Activated CD8-positive, alpha-beta T cell treated with anti-CD3 and anti-CD28 coated beads, Interleukin-2, amount 10 ng/mL, durations not matched to agents 7 days and 5 days (primary cell): ENCODE measurements at regions of chr3 and their contacts with region 1.

Region 1: DNA sequence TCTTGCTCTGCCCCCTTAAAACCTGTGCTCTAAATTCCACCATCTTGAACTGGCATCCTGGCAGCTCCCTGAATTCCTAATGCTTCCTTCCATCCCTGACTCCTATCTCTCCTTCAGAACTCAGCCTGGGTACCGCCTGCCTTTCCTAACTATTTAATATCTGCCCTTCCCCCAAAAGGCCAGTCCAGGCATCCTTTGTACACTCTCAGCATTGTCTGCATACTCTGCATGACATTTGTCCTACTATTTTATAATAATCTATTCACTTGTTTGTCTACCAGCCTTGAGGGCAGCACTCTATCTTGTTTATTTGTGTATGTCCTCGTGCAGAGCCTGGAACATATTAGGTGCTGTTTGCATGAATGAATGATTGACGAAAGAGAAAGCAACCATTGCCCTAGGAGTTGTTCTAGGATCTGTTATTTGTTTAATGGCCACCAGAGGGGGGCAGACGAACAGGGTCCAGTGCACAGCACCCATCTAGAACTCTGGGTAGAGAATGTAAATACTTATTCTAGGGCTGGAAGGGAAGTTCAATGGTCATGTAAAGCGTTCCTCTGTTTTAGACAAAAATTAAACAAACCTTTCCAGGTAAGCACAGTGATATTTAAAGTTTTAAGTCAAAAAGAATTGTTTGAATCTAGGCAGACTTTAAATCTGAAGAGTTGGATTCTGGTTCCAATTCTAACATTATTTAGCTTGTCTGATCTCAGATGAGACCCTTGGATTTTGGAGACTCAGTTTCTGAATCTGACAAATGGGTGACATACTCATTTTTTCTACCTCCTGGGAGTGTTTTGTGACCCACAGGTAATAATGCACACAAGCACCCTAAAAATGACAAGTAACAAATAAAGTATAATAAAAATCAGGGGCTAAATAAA is 125.8 kb upstream of the GALNT15 start:
- DNase-seq: peak; percentile 59
- ATAC-seq: peak; percentile 95
- H3K4me3 Mint-ChIP-seq: no peak overlapping the region
- H3K27ac Mint-ChIP-seq: no peak overlapping the region
- H3K4me1 Mint-ChIP-seq: peaks cover 3% of the 10 kb centered on the region
- H3K27me3 Mint-ChIP-seq: peaks cover 4% of the 10 kb centered on the region

Region 2: GRCh38 chr3:16060358-16060852 is 11.7 kb after region 1 on chr3:
- CTCF ChIA-PET with region 1: interaction called, 13 read pairs
- POLR2A ChIA-PET with region 1: no interaction called
- DNase-seq: no peak
- ATAC-seq: no peak
- H3K4me3 Mint-ChIP-seq: no peak overlapping the region
- H3K27ac Mint-ChIP-seq: no peak overlapping the region
- H3K4me1 Mint-ChIP-seq: no peaks in the 10 kb centered on the region
- H3K27me3 Mint-ChIP-seq: peaks cover 9% of the 10 kb centered on the region

Region 3: GRCh38 chr3:16177962-16178627 is 129.4 kb after region 1 on chr3:
- CTCF ChIA-PET with region 1: interaction called, 25 read pairs
- POLR2A ChIA-PET with region 1: no interaction called
- DNase-seq: peak; percentile 69
- ATAC-seq: peak; percentile 85
- H3K4me3 Mint-ChIP-seq: no peak overlapping the region
- H3K27ac Mint-ChIP-seq: no peak overlapping the region
- H3K4me1 Mint-ChIP-seq: no peaks in the 10 kb centered on the region
- H3K27me3 Mint-ChIP-seq: peaks cover 18% of the 10 kb centered on the region

Region 4: DNA sequence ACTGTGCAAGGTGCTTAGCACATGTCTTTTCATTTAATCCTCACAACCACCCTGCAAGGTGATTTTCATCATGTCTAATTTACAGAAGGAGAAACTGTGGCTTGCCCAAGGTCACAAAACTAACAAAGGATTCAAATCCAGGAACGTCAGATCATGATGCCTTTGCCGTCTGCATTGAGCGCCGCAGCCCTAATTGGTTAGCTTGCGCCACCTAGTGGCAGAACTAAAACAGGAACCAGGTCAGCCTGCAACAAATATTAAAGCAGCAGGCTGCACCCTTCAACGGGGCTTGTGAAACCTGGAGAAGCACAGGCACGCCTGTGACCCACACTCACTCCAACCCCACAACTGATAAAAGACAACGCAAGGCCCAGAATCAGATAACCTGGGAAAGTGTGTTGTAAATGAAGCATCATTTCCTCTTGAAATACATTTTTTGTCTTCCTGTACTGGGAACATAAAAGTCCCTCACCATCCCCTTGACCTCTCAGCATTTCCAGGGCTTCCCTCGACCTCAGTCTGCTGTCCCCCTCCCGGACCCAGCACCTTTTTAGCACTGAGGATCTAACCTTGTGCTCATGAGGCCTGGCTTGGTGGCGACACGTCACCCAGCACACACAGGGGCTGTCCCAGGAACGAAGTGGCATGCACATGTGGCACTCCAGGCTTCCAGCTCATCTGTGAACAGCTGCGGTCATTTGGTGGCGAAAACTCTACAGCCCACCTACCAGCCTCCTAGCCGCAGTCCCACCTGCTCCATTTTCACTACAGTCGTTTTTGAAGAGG is 198.8 kb after region 1 on chr3:
- CTCF ChIA-PET with region 1: interaction called, 18 read pairs
- POLR2A ChIA-PET with region 1: no interaction called
- DNase-seq: peak; percentile 86
- ATAC-seq: peak; percentile 90
- H3K4me3 Mint-ChIP-seq: no peak overlapping the region
- H3K27ac Mint-ChIP-seq: no peak overlapping the region
- H3K4me1 Mint-ChIP-seq: peaks cover 12% of the 10 kb centered on the region
- H3K27me3 Mint-ChIP-seq: no peaks in the 10 kb centered on the region